Sigmoid colon (tissue), 7 donors: ENCODE measurements at regions of chr1 and their contacts with region 1.

Region 1: GRCh38 chr1:27603681-27604578 is at the start of gene AHDC1:
- DNase-seq: peak; percentile 97
- H3K4me3 ChIP-seq: peak within 1 kb of the TSS; percentile 67 to 99 (median 96)
- H3K27ac ChIP-seq: peak within 1 kb of the TSS; percentile 92 to 100 (median 97)
- H3K4me1 ChIP-seq: peaks cover 0 to 54% (median 44%) of the 10 kb centered on the region in 4 donors
- H3K27me3 ChIP-seq: no peaks in the 10 kb centered on the region
- CTCF ChIP-seq: no peak
- EP300 ChIP-seq: no peak
- POLR2A ChIP-seq: peak; percentile 76 to 87
- total RNA-seq, gene AHDC1: 10.9 to 34.1 (median 14.3) TPM

Region 2: GRCh38 chr1:27321813-27322577 is 281.9 kb before region 1 on chr1 and contains the start of gene TMEM222:
- intact Hi-C with region 1: loop called (anchors 10 kb)
- DNase-seq: peak; percentile 99
- H3K4me3 ChIP-seq: peak within 1 kb of the TSS; percentile 66 to 92 (median 87)
- H3K27ac ChIP-seq: peak within 1 kb of the TSS; percentile 79 to 90 (median 88)
- H3K4me1 ChIP-seq: peaks cover 0 to 38% (median 25%) of the 10 kb centered on the region in 4 donors
- H3K27me3 ChIP-seq: no peaks in the 10 kb centered on the region
- CTCF ChIP-seq: peak in 2 of 4 experiments; percentile 15 to 23
- EP300 ChIP-seq: peak in 1 of 4 donors; percentile 76
- POLR2A ChIP-seq: peak; percentile 25 to 48
- total RNA-seq, gene TMEM222: 18.9 to 20.9 (median 19.6) TPM

Region 3: DNA sequence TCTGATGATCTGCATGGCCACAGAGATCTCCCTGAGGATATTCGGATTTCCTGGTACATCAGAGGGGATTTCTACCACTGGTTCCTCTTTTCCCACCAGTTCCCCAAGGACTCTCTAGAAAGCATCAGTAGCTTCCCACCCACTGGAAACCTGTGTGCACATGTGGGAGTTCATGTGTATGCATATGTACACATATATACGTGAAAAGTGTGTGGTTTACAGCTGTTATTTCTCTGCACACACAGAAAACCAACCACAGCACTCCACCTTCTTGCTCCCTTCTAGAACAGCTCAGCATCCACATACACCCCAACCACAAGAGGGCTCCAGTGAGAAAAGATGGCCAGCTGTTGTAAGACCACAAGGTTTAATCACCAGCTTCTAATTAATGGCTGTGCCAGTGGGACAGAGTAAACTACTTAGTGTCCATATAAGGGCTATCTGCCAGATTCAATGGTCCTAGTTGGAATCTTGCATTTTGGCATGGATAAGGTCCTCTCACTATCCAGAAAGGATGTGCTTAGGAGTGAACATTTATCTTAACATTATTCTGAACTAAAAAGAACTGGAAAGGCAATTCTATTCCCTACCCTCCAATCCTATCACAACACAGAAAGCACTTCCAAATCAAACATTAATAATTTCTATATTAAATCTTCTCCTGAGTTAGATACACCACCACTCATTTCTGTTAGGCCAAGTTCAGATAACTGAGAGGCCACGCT is 187.4 kb before region 1 on chr1:
- intact Hi-C with region 1: loop called (anchors 1 kb)
- DNase-seq: no peak
- H3K4me3 ChIP-seq: no peak overlapping the region
- H3K27ac ChIP-seq: peak overlapping the region; percentile 81 to 91 (median 85)
- H3K4me1 ChIP-seq: peaks cover 3 to 54% (median 45%) of the 10 kb centered on the region in 4 donors
- H3K27me3 ChIP-seq: no peaks in the 10 kb centered on the region
- CTCF ChIP-seq: peak; percentile 54 to 63 (median 60)
- EP300 ChIP-seq: no peak
- POLR2A ChIP-seq: no peak

Region 4: GRCh38 chr1:27556781-27557595 is 46.9 kb before region 1 on chr1:
- intact Hi-C with region 1: loop called (anchors 1 kb)
- DNase-seq: peak; percentile 98
- H3K4me3 ChIP-seq: peak overlapping the region in 3 of 4 donors; percentile 13 to 34 (median 34)
- H3K27ac ChIP-seq: peak overlapping the region; percentile 82 to 98 (median 90)
- H3K4me1 ChIP-seq: peaks cover 0 to 73% (median 68%) of the 10 kb centered on the region in 4 donors
- H3K27me3 ChIP-seq: no peaks in the 10 kb centered on the region
- CTCF ChIP-seq: peak; percentile 85 to 96 (median 94)
- EP300 ChIP-seq: no peak
- POLR2A ChIP-seq: no peak

Region 5: GRCh38 chr1:27616441-27616840 is 12.5 kb after region 1 on chr1:
- intact Hi-C with region 1: no loop called
- DNase-seq: no peak
- H3K4me3 ChIP-seq: no peak overlapping the region
- H3K27ac ChIP-seq: no peak overlapping the region
- H3K4me1 ChIP-seq: peaks cover 0 to 10% (median 7%) of the 10 kb centered on the region in 4 donors
- H3K27me3 ChIP-seq: no peaks in the 10 kb centered on the region
- CTCF ChIP-seq: no peak
- EP300 ChIP-seq: no peak
- POLR2A ChIP-seq: no peak

Region 6: DNA sequence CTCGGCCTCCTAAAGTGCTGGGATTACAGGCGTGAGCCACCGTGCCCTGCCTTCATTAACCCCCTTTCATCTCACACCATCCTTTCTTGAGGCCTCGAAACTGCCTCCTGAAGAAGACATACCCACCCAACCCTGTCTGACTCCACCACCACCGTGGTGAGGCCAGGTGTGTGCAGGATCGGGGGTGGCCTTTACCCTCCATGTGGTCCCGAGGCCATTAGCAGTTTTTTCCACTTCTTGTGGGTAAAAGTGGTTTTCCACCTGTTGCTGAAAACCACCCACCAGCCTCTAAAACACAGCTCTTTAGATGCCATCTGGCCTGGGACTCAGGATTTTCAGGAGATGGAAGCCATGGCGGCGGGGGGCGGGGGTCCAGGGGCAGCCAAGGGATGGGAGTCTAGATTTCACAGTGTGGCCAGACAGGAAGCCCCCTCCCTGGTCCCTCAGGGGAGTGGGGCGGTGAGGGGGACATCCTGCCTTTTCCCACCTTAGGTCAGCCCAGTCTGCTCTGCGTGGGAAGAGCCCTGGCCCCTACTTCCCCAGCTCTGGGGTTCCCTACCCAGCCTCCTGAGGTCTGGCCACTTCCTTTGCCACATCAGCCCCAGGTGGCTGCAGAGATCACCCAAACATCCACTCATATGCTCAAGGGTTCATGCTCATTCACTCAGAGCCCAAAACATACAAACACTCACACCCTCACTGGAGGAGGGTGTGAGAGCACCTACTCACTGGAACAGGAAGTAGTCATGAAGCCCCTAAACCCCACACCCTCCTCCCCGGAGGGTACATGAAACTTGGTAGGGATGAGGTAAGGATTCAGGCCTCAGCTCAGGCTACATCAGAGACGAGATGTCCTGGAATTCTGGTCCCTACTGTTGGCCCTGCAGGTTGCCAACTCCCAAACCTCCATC is 28.7 kb after region 1 on chr1:
- intact Hi-C with region 1: no loop called
- DNase-seq: no peak
- H3K4me3 ChIP-seq: no peak overlapping the region
- H3K27ac ChIP-seq: peak overlapping the region; percentile 9 to 69 (median 62)
- H3K4me1 ChIP-seq: peaks cover 0 to 21% (median 7%) of the 10 kb centered on the region in 4 donors
- H3K27me3 ChIP-seq: peaks cover 15 to 29% (median 21%) of the 10 kb centered on the region in 3 donors
- CTCF ChIP-seq: no peak
- EP300 ChIP-seq: no peak
- POLR2A ChIP-seq: no peak

Region 7: GRCh38 chr1:27662707-27663393 is 58.9 kb after region 1 on chr1:
- intact Hi-C with region 1: loop called (anchors 1 kb)
- DNase-seq: peak; percentile 90
- H3K4me3 ChIP-seq: no peak overlapping the region
- H3K27ac ChIP-seq: peak overlapping the region; percentile 5 to 29 (median 16)
- H3K4me1 ChIP-seq: peaks cover 0 to 13% (median 5%) of the 10 kb centered on the region in 4 donors
- H3K27me3 ChIP-seq: no peaks in the 10 kb centered on the region
- CTCF ChIP-seq: peak; percentile 80 to 95 (median 93)
- EP300 ChIP-seq: no peak
- POLR2A ChIP-seq: no peak